Activated CD8-positive, alpha-beta T cell treated with anti-CD3 and anti-CD28 coated beads for 36 hours (primary cell): ENCODE measurements at regions of chr1 and their contacts with region 1.

Region 1: DNA sequence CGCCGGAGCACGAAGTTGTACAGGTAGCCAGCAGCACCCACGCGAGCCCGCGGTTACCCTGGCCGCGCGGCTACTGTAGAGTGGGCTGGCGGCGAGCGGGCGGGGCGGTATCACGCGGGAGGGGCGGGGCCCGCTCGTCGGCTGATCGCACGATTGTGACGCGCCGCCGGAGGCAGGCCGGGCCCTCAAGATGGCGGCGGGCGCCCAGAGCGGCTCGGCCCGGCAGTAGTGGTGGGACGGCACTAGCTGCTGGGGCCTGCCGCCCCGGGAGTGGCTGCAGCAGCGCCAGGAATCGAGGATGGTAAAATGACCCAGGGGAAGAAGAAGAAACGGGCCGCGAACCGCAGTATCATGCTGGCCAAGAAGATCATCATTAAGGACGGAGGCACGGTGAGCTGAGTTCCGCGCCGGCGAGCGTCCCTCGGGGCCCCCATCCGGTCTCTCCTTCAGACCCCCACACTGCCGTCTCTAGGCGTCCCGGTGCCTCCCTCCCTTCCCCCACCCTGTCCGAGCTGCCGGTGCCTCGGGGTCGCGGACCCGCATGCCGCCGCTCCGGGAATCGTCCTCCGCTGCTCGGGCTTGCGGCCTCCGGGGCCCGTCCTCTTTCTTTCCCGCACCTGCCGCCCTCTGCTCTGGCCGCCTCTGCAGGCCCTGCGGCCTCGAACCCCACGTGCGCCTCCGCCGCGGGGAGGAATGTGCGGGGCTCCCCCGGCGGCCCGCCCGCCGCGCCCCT is 68.3 kb downstream of the SLC35A3 start:
- DNase-seq: peak; percentile 94
- ATAC-seq: peak; percentile 85
- H3K4me3 Mint-ChIP-seq: peak overlapping the region; percentile 86
- H3K27ac Mint-ChIP-seq: peak overlapping the region; percentile 99
- H3K4me1 Mint-ChIP-seq: peaks cover 45% of the 10 kb centered on the region
- H3K27me3 Mint-ChIP-seq: no peaks in the 10 kb centered on the region
- CTCF ChIP-seq: no peak

Region 2: DNA sequence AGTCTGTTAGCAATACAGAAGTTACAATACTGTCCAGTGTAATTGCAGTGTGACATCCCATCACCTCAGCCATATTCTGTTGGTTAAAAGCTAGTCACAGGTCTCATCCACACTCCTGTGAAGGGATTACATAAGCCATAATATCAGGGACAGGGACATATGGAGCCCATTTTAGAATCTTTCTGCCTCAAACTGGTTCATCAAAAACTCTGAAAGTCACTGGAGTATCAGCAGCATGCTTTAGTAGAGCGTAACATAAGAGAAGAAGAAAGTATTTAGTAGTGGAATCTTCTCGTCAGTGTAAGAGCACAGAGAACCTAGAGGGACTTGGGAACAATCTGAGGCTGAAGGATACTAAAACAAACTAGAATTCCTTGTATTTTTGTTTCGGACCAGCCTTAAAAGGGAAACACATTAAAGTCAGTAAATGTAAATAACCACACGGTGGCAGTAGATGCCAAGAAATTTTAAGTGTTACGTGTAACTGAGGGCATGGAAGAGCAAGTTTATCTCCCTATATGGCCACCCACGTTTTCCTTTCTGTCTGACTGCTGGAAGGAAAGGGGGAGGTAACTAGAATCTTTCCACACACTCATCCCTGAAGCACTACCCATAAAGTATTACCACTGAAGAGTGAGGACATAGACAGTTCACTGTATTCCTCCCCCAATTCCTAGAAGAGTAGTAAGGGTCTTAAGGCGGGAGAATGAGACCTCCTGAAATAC is 229.5 kb before region 1 on chr1:
- CTCF ChIA-PET with region 1: interaction called, 3 read pairs
- POLR2A ChIA-PET with region 1: no interaction called
- intact Hi-C with region 1: loop called (anchors 5 kb)
- DNase-seq: peak; percentile 45
- ATAC-seq: peak; percentile 84
- H3K4me3 Mint-ChIP-seq: peak overlapping the region; percentile 5
- H3K27ac Mint-ChIP-seq: peak overlapping the region; percentile 58
- H3K4me1 Mint-ChIP-seq: peaks cover 18% of the 10 kb centered on the region
- H3K27me3 Mint-ChIP-seq: peaks cover 13% of the 10 kb centered on the region
- CTCF ChIP-seq: peak; percentile 77

Region 3: DNA sequence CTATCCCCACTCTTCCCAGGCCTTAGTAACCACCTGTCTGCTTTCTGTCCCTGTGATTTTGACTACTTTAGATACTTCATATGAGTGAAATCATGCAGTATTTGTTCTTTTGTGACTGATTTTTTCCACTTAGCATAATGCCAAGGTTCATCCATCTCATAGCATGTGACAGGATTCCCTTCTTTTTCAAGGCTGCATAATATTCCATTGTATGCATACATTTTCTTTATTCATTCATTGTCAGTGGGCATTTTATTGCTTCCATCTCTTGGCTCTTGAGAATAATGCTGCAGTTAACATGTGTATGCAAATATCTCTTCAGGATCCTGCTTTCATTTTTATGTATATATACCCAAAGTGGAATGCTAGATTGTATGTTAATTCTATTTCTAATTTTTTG is 131.6 kb before region 1 on chr1:
- CTCF ChIA-PET with region 1: no interaction called
- POLR2A ChIA-PET with region 1: no interaction called
- intact Hi-C with region 1: no loop called
- DNase-seq: no peak
- ATAC-seq: no peak
- H3K4me3 Mint-ChIP-seq: no peak overlapping the region
- H3K27ac Mint-ChIP-seq: no peak overlapping the region
- H3K4me1 Mint-ChIP-seq: peaks cover 5% of the 10 kb centered on the region
- H3K27me3 Mint-ChIP-seq: no peaks in the 10 kb centered on the region
- CTCF ChIP-seq: no peak

Region 4: DNA sequence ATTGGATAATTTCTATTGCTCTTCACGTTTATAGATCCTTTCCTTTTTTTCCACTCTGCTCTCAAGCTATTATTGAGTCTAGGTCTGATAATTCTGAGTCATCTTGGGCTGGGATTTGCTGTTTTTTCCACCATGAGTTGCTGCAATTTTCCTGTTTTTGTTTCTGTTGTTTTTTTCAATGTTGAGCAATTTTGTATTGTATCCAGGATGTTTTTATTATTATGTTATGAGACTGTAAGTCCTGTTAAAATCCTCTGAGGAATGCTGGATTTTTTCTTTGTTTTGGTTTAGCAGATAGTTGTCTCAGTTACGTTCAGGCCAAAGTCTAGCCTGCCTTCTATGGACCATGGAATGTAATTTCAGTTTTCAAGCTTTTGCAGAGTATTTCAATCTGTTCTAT is 81.3 kb before region 1 on chr1:
- CTCF ChIA-PET with region 1: no interaction called
- POLR2A ChIA-PET with region 1: no interaction called
- intact Hi-C with region 1: no loop called
- DNase-seq: no peak
- ATAC-seq: no peak
- H3K4me3 Mint-ChIP-seq: no peak overlapping the region
- H3K27ac Mint-ChIP-seq: no peak overlapping the region
- H3K4me1 Mint-ChIP-seq: no peaks in the 10 kb centered on the region
- H3K27me3 Mint-ChIP-seq: no peaks in the 10 kb centered on the region
- CTCF ChIP-seq: no peak

Region 5: DNA sequence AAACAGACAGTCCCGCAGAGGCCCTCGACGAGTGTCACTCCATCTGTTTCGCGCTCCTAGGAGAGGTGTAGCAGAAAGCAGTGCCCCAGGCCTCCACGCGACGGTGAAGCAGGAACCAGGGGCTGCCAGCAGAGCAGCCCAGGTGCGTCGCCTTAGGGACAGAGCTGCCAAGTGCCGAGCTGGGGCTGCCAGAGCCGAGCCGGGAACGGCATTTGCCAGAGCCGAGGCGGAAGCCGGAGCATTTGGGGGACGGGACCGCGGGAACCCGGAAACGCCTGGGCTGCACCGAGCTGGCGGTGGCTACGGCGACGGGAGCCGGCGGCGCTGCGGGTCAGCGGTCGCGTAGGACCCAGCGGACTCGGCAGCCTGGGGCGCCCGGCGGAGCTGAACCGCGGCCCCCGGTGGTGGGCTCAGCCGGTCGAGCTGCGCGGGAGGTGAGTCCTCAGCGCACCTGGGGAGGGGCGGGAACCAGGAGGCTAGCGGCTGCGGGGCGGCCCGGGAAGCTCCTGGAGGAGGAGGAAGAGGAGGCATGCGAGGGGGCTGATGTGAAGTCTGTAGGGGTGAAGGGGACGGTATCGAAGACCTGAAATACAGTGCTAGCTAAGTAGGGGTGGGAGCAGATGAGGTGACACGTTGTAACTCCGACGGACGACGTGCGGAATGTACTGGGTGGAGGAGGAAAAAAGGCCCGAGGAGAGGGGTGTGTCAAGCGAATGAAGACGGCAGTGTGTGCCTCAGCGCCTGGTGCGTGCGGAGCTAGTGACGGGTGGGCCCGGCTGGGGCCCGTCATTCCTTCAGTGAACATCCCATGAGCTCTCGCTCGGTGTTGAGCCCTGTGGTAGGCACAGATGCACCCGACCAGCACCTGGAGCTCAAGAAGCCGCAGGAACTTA is 68.1 kb before region 1 on chr1 and contains the start of gene SLC35A3:
- CTCF ChIA-PET with region 1: no interaction called
- POLR2A ChIA-PET with region 1: interaction called, 14 read pairs
- intact Hi-C with region 1: no loop called
- DNase-seq: peak; percentile 81
- ATAC-seq: peak; percentile 87
- H3K4me3 Mint-ChIP-seq: peak within 1 kb of the TSS; percentile 100
- H3K27ac Mint-ChIP-seq: peak within 1 kb of the TSS; percentile 98
- H3K4me1 Mint-ChIP-seq: peaks cover 17% of the 10 kb centered on the region
- H3K27me3 Mint-ChIP-seq: no peaks in the 10 kb centered on the region
- CTCF ChIP-seq: no peak
- total RNA-seq, gene SLC35A3: 17.5 to 19.3 TPM

Region 6: GRCh38 chr1:100132566-100133477 is 94.7 kb after region 1 on chr1 and contains the starts of genes SASS6 and TRMT13:
- CTCF ChIA-PET with region 1: no interaction called
- POLR2A ChIA-PET with region 1: interaction called, 6 read pairs
- intact Hi-C with region 1: loop called (anchors 5 kb)
- DNase-seq: peak; percentile 98
- ATAC-seq: peak; percentile 95
- H3K4me3 Mint-ChIP-seq: peak within 1 kb of the TSS; percentile 89
- H3K27ac Mint-ChIP-seq: peak within 1 kb of the TSS; percentile 96
- H3K4me1 Mint-ChIP-seq: peaks cover 37% of the 10 kb centered on the region
- H3K27me3 Mint-ChIP-seq: no peaks in the 10 kb centered on the region
- CTCF ChIP-seq: no peak
- total RNA-seq, gene SASS6: 12.9 to 13.6 TPM
- total RNA-seq, gene TRMT13: 15.5 to 17.5 TPM